ENCODE measurements at regions of chr7 and their contacts with region 1.

Region 1: DNA sequence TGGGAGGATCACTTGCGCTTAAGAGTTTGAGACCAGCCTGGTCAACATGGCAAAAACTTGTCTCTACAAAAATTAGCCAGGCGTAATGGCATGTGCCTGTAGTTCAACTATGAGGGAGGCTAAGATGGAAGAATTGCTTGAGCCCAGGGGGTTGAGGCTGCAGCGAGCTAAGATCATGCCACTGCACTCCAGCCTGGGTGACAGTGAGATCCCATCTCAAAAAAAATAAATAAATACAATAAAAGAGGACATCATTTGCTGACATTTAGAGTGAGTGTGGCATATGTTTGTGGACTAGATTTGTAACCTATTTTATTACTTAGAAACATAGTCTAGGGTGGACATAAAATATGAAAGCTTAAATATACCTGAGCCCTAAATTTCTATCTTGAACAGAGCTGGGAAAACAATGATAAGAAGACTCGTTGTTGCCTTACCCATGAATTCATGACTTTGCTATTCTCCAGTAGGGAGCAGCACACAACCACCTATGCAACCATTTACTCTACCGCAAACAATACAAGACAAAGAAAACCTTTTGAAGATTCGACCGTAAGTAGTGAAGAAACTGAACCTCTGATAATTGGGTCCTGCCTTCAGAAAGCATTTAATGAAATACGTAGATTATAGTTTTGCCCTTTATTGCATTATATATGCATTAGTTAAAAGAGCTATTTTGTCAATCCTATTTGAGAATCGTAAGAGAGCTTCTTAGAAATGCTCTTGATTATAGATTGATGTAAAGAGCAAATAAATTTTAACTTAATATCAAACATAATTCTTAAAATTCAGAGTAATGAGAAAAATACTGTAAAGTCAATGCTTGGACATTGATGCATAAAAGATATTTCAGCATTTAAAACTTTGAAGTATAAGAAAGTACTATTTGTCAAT is 83.5 kb downstream of the GNAT3 start:
- DNase-seq: peak; percentile 14 to 57 (median 32)
- ATAC-seq: peak; percentile 76
- H3K4me3 ChIP-seq: no peak overlapping the region
- H3K27ac ChIP-seq: no peak overlapping the region
- H3K4me1 ChIP-seq: no peaks in the 10 kb centered on the region
- H3K27me3 ChIP-seq: no peaks in the 10 kb centered on the region
- CTCF ChIP-seq: peak; percentile 22 to 83 (median 79)
- POLR2A ChIP-seq: no peak

Region 2: DNA sequence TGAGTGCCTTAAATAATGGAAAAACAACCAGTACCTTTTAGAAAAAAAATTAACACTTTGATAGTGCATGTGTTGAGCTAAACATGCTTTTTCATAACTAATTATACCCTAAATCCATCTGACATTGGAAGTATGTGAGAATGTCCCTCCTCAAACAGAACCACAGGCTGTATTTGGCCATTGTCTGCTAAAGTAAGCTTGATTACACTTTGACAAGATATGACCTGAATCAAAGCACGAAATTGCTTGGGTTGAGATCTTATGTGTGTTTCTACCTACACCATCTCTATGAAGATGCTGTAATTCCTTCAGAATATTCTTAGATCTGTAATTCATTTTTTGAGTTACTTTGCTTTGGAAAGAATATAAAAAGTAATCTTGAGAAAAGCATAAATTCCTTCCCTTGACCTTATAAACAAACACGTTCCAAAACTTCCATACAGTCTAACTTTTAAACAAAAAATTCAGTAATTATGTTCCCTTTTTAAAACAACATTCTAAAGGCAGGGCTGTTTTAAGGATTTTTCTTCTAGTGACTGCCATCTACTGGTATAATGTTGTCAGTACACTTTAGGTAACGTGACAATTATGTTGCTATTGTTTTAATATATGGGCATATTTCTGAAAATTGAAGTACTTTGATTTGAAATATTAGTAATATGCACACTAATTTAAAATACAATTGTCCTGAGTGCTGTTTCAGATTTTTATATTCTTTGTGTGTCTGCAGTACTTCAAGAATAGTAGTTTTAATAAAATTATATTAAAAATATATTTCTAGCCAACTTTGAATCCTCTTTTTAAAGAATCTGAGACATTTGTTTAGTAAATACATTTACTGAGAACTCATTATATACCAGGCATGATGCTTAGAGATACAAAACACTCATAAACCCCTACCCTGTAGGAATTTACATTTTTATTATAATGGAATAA is 231.0 kb after region 1 on chr7:
- intact Hi-C with region 1: loop called (anchors 5 kb)
- DNase-seq: no peak
- ATAC-seq: no peak
- H3K4me3 ChIP-seq: no peak overlapping the region
- H3K27ac ChIP-seq: no peak overlapping the region
- H3K4me1 ChIP-seq: no peaks in the 10 kb centered on the region
- H3K27me3 ChIP-seq: no peaks in the 10 kb centered on the region
- CTCF ChIP-seq: peak; percentile 50 to 78 (median 76)
- POLR2A ChIP-seq: no peak